Psoas muscle (tissue), 8 donors: ENCODE measurements at regions of chr12 and their contacts with region 1.

Region 1: DNA sequence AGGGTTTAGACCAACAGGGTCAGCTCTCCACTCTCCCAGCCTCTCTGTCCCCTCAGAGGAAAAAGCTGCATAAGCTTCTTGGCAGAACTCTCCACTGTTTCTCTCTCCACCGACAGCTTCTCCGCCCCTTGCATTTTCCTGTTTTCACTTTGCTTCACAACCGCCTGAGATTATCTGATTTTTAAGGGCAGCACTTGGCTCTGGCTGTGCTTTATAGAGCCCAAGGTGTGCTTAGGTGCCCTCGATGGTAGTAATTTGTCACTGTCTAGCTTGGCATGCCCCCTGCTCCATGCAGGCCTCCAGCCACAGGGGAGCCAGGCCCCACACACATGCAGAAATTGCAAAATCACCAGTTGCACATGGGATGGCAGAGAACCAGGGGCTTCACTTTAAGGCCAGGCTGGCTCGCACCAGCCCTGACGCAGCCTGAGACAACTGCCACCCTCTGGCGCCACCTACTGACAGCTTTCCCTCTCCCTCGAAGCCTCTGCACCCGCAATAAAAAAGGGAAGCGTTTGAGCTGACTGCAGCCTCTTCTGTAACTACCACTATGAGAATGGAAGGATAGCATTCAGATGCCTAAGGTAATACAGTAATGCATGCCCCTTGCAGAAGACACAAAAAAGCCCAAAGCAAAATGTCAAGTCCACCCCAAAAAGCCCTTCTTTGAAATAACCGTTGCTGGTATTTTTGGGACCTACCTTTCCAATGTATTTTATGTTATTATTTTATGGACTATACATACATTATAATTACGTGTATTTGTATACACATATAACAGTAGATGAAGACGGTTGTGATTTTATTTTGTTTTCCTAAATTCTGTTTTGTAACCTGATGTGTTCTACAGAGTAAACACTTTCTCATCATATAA is 32.0 kb upstream of the RIMBP2 start:
- DNase-seq: peak; percentile 81 to 86
- ATAC-seq: peak; percentile 70 to 79 (median 74)
- H3K4me3 ChIP-seq: no peak overlapping the region
- H3K27ac ChIP-seq: no peak overlapping the region
- H3K4me1 ChIP-seq: no peaks in the 10 kb centered on the region
- H3K27me3 ChIP-seq: peaks cover 0 to 10% (median 0%) of the 10 kb centered on the region in 3 donors
- CTCF ChIP-seq: peak; percentile 68

Region 2: DNA sequence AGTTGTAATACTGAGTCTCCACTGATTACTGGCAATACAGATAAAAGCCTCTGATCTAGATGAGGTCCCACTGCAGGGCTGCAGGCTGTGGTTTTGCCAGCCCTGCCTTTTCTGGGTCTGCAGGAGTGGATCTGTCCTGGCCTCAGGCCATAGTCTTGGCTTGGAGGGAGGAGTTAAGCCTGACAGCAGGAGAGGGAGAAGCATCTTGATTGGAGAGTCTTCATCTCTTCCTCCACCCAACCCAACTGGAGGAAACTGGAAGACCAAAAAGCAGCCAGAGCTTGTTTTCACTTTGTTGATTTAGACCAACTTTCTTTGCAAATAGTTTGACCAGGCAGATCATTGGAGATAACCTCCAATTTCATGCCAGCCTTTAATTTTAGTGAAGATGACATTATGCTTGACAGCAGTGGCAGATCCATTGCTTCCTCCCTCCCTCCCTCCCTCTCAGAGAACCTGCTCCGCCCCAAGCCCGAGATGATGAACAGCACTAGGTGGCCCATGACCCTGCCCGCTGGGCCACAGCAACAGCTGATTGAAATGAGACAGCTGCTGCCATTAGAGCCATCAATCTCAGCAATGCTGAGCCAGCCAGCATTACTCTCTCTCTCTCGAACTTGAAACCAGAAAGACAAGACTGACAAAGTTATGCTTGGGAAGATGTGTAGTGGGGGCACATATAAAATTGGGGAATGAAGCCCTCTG is 1672.5 kb before region 1 on chr12:
- intact Hi-C with region 1: no loop called
- DNase-seq: no peak
- ATAC-seq: peak; percentile 56 to 89 (median 78)
- H3K4me3 ChIP-seq: no peak overlapping the region
- H3K27ac ChIP-seq: no peak overlapping the region
- H3K4me1 ChIP-seq: no peaks in the 10 kb centered on the region
- H3K27me3 ChIP-seq: no peaks in the 10 kb centered on the region
- CTCF ChIP-seq: no peak

Region 3: GRCh38 chr12:130031571-130032189 is 716.4 kb before region 1 on chr12:
- intact Hi-C with region 1: loop called in 1 of 2 experiments (anchors 10 kb)
- DNase-seq: peak in 1 of 2 donors; percentile 39
- ATAC-seq: no peak
- H3K4me3 ChIP-seq: no peak overlapping the region
- H3K27ac ChIP-seq: no peak overlapping the region
- H3K4me1 ChIP-seq: no peaks in the 10 kb centered on the region
- H3K27me3 ChIP-seq: peaks cover 0 to 2% (median 0%) of the 10 kb centered on the region in 3 donors
- CTCF ChIP-seq: peak; percentile 57

Region 4: DNA sequence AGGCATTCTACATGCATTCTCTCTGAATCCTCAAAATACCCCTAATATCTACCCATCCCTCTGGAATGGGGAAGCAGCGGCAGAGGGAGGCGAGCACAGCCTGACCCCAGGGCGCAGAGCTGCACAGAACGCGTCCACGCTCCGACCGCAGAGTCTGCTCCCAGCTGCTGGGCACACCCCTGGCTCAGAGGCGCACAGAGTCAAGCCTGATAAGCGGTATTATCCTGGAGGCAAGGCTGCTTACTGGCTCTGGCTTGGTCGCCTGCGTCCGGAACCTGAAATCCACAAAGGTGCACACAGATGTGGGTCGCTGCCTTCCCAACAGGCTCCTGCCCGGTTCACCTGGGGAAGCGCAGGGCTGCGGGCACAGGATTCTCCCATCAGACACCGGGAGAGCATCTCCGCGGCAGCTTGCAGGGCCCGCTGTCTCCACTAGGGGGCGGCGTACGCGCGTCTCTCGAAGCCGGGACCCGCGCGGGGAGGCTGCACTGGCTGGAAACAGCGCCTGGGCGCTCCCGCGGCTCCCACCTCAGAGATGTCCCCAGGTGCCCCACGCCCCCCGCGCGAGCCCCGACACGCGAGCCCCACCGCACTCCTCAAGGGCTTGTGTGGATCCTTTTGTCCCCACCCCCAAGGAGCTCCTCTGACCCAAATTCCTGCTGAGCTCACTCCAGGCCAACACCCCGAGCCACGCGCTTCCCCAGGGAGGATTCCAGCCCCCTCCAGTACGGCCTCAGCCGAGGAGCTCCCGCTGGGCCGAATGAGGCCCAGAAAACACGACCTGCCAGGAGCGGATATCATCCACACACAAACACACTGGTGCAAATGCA is 705.9 kb before region 1 on chr12:
- intact Hi-C with region 1: loop called (anchors 10 kb)
- DNase-seq: peak; percentile 38 to 68
- ATAC-seq: no peak
- H3K4me3 ChIP-seq: no peak overlapping the region
- H3K27ac ChIP-seq: no peak overlapping the region
- H3K4me1 ChIP-seq: no peaks in the 10 kb centered on the region
- H3K27me3 ChIP-seq: peaks cover 0 to 48% (median 5%) of the 10 kb centered on the region in 3 donors
- CTCF ChIP-seq: peak; percentile 55

Region 5: GRCh38 chr12:130401703-130402102 is 346.4 kb before region 1 on chr12:
- intact Hi-C with region 1: loop called in 1 of 2 experiments (anchors 5 kb)
- DNase-seq: no peak
- ATAC-seq: no peak
- H3K4me3 ChIP-seq: no peak overlapping the region
- H3K27ac ChIP-seq: no peak overlapping the region
- H3K4me1 ChIP-seq: no peaks in the 10 kb centered on the region
- H3K27me3 ChIP-seq: peaks cover 0 to 1% (median 0%) of the 10 kb centered on the region in 3 donors
- CTCF ChIP-seq: no peak

Region 6: DNA sequence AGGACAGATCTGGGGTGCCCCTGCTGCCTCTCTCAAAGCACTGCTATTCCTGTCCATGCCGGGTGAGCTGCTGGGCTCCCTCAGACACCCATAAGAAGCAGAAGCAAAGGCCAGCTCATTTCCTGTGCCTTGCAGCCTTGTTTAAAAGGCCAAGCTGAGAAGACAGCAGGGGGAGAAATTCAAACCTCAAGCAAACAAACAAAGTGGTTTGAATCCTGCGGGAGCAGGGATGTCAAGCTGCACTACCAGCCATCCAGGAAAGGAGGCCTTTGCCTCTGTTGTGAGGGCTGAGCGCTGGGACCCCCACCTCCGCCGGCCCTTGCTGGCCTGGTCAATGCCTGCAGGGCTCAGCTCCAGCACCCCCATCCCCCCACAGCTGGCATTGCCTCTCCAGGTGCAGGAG is 234.0 kb before region 1 on chr12:
- intact Hi-C with region 1: no loop called
- DNase-seq: no peak
- ATAC-seq: no peak
- H3K4me3 ChIP-seq: no peak overlapping the region
- H3K27ac ChIP-seq: no peak overlapping the region
- H3K4me1 ChIP-seq: no peaks in the 10 kb centered on the region
- H3K27me3 ChIP-seq: peaks cover 0 to 17% (median 4%) of the 10 kb centered on the region in 3 donors
- CTCF ChIP-seq: no peak

Region 7: DNA sequence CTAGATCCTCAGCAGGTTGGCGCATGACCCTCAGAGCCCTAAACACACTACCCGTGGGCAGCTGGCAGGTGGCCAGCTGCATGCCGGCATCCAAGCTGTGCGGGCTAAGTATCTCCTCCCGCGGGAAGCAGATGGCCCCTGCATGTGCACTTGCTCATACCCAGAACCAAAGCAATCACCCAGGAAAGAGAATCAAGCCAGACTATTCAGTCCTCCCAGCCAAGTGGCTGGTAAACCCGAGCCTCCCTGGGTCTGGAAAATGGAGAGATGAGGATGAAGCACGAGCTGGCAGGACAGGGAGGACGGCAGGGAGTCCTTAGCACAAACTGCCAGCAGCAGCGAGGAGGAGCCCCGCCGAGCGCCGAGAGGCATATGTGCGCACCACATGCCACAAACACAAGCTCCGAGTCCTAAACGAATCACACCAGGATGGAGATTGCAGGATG is 171.7 kb before region 1 on chr12:
- intact Hi-C with region 1: no loop called
- DNase-seq: no peak
- ATAC-seq: no peak
- H3K4me3 ChIP-seq: no peak overlapping the region
- H3K27ac ChIP-seq: no peak overlapping the region
- H3K4me1 ChIP-seq: no peaks in the 10 kb centered on the region
- H3K27me3 ChIP-seq: no peaks in the 10 kb centered on the region
- CTCF ChIP-seq: no peak

Region 8: GRCh38 chr12:130815028-130815741 is 67.1 kb after region 1 on chr12:
- intact Hi-C with region 1: no loop called
- DNase-seq: no peak
- ATAC-seq: no peak
- H3K4me3 ChIP-seq: no peak overlapping the region
- H3K27ac ChIP-seq: no peak overlapping the region
- H3K4me1 ChIP-seq: no peaks in the 10 kb centered on the region
- H3K27me3 ChIP-seq: no peaks in the 10 kb centered on the region
- CTCF ChIP-seq: no peak